ENCODE measurements at regions of chr20 and their contacts with region 1.

Region 1: DNA sequence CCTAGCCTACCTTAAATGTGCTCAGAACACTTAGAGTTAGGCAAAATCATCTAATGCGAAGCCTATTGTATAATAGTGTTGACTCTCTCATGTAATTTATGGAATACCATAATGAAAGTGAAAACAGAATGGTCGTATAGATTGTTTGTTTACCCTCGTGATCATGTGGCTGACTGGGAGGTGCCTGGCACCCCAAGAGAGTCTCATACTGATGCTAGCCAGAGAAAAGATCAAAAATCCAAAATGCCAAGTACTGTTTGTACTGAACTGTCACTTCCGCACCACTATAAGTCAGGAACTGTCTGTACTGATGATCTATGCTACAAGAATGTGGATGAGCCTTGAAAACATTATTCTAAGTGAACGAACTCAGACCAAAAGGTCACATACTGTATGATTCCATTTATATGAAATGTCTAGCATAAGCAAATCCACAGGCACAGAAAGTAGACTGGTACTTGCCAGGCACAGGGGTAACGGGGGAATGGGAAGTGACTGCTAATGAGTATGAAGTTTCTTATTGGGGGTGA is 22.4 kb downstream of the ZMYND8 start:
- DNase-seq: peak; percentile 95
- H3K4me3 ChIP-seq: peak overlapping the region; percentile 7
- H3K27ac ChIP-seq: peak overlapping the region; percentile 93
- H3K27me3 ChIP-seq: no peaks in the 10 kb centered on the region
- CTCF ChIP-seq: no peak

Region 2: DNA sequence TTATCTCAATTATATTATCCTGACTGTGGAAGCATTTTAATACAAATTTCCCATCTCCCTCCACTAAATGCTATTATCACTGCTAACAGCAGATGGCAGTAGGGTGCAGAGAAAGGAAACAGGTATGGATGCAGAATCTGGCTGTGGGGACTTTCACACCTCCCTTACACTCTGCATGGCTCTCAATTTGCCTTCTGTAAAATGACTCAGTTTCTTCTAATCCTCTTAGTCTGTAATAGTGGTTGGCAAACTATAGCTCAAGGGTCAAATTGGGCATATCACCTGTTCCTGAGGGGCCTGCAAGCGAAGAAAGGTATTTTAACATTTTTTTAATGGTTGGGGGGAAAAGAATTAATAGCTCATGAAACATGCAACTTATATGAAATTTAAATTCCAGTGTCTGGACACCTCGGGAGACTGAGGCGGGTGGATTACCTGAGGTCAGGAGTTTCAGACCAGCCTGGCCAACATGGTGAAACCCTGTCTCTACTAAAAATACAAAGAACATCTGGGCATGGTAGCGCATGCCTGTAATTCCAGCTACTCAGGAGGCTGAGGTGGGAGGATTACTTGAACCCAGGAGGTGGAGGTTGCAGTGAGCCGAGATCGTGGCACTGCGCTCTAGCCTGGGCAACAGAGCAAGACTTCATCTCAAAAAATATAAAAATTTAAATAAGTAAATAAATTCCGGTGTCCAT is 61.0 kb before region 1 on chr20:
- in situ Hi-C with region 1: loop called (anchors 10 kb)
- DNase-seq: peak; percentile 63
- H3K4me3 ChIP-seq: no peak overlapping the region
- H3K27ac ChIP-seq: peak overlapping the region; percentile 93
- H3K27me3 ChIP-seq: no peaks in the 10 kb centered on the region
- CTCF ChIP-seq: peak; percentile 84

Region 3: DNA sequence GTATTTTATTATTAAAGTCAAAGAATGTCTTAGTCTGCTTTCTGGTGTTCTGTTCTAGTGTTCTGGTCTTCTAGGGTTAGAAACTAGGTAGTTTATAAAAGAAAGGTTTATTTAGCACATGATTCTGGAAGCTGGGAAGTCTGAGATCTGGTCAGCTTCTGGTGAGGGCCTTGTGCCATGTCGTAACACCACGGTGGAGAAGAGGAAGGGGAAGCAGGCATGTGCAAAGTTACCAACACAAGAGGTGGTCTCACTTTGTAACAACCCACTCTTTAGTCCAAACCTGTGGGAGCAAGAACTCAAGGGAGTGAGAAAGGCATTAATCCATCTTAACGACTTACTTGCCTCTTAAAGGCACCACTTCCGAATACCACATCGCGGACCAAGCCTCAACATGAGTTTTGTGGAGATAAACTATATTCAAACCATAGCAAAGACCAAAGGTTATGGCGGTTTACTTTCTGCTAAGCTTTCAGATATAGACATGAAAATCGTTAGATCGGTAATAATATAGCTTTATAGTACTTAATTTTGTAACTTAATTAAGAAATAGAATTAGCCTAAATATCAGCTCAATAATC is 267.0 kb after region 1 on chr20:
- in situ Hi-C with region 1: no loop called
- DNase-seq: no peak
- H3K4me3 ChIP-seq: no peak overlapping the region
- H3K27ac ChIP-seq: no peak overlapping the region
- H3K27me3 ChIP-seq: no peaks in the 10 kb centered on the region
- CTCF ChIP-seq: no peak